ENCODE measurements at regions of chr16 and their contacts with region 1.

Region 1: DNA sequence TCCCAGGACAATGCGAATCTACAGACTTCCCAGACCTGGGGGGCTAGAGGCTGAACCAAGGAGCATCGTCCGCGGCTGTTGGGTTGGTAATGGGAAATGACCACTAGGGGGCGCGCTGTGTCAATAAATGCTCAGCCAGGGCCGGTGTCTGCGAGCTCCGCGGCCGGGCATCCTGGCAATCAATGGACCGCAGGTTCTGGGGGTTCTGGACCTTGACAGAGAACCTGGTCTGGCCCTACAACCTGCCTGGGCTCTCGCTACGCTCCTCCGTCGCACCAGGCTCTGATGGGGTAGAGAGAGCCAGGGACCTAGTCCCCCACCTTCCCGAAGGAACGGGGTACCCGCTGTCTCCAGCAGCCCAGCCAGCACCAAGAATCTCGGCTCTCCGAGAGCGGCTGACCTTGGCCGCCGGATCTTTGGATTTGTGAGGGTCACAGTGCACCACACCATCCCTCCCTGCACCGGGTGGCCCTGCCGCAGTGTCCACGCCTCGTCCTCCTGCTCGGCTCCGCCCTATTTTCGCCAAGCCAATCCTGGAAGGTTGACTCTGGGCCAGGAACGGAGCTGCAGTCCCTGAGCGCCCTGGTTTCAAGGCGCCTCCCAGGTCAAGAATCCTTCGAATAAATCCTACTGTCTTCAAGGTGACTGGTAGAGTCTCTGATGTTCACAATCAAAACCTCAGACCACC is 20.4 kb upstream of the BEAN1 start:
- DNase-seq: peak; percentile 83 to 92
- ATAC-seq: peak; percentile 87 to 94
- H3K4me3 ChIP-seq: peak overlapping the region; percentile 61
- H3K27ac ChIP-seq: peak overlapping the region; percentile 86 to 88
- H3K4me1 ChIP-seq: peaks cover 27% of the 10 kb centered on the region
- CTCF ChIP-seq: peak; percentile 87
- EP300 ChIP-seq: no peak
- POLR2A ChIP-seq: peak; percentile 37
- RAD21 ChIP-seq: peak; percentile 98

Region 2: GRCh38 chr16:66335704-66336329 is 70.9 kb before region 1 on chr16:
- CTCF ChIA-PET with region 1: no interaction called
- POLR2A ChIA-PET with region 1: no interaction called
- DNase-seq: no peak
- ATAC-seq: no peak
- H3K4me3 ChIP-seq: no peak overlapping the region
- H3K27ac ChIP-seq: no peak overlapping the region
- H3K4me1 ChIP-seq: no peaks in the 10 kb centered on the region
- CTCF ChIP-seq: no peak
- EP300 ChIP-seq: no peak
- POLR2A ChIP-seq: no peak
- RAD21 ChIP-seq: no peak

Region 3: GRCh38 chr16:66434619-66435430 is 28.1 kb after region 1 on chr16:
- CTCF ChIA-PET with region 1: interaction called, 17 read pairs
- POLR2A ChIA-PET with region 1: no interaction called
- DNase-seq: no peak
- ATAC-seq: no peak
- H3K4me3 ChIP-seq: no peak overlapping the region
- H3K27ac ChIP-seq: peak overlapping the region; percentile 61 to 82; a peak in 5 of 6 replicates
- H3K4me1 ChIP-seq: peaks cover 17% of the 10 kb centered on the region
- CTCF ChIP-seq: no peak
- EP300 ChIP-seq: no peak
- POLR2A ChIP-seq: no peak
- RAD21 ChIP-seq: no peak

Region 4: GRCh38 chr16:66469291-66469946 is 62.7 kb after region 1 on chr16:
- CTCF ChIA-PET with region 1: interaction called, 185 read pairs
- POLR2A ChIA-PET with region 1: no interaction called
- DNase-seq: no peak
- ATAC-seq: no peak
- H3K4me3 ChIP-seq: no peak overlapping the region
- H3K27ac ChIP-seq: no peak overlapping the region
- H3K4me1 ChIP-seq: 0 out of 3 replicates have a peak, but pooled peaks cover 5% of the 10 kb centered on the region
- CTCF ChIP-seq: no peak
- EP300 ChIP-seq: no peak
- POLR2A ChIP-seq: no peak
- RAD21 ChIP-seq: no peak

Region 5: DNA sequence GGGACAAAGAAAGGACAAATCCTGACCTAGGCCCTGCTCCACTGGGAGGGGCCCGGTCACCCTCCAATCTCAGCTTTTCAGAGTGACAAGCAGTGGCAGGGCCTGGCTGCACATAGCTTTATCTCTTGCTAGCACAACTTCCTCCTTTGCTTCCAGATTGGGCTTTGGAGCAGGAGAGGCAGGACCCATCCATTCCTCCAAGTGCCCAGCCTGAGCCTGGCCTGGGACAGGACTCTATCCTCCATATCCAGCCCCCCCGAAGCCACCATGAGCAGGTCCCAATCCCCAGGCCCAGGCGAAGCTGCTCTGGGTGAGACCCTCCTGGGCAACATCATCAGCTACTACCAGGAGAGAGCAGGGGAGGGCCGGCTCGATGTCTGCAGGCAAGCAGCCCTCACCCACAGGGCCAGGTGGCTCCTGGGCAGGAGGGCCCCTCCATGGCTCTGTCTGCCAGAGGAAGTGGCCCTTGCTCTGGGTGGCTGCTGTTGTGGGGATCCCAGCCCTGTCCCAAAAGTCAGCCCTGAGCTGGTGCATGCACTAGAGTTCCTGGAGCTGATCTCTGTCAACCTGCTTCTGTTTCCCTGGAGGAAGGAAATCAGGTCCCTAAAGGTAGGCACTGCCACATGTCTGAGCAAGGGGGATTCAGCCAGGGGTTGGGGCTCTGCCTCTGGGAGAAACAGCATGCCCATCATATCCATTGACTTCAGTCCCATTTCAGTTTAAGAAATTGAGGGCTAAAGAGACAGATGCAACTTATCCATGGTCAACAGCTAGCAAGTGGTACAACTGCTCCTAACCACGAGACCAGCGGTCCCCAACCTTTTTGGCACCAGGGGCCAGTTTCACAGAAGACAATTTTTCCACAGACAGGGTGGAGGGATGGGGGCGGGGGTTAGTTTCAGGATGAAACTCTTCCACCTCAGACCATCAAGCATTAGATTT is 84.4 kb after region 1 on chr16:
- CTCF ChIA-PET with region 1: interaction called, 185 read pairs
- POLR2A ChIA-PET with region 1: no interaction called
- DNase-seq: no peak
- ATAC-seq: no peak
- H3K4me3 ChIP-seq: no peak overlapping the region
- H3K27ac ChIP-seq: peak overlapping the region in 1 of 2 experiments; percentile 48; a peak in 4 of 6 replicates
- H3K4me1 ChIP-seq: peaks cover 12% of the 10 kb centered on the region
- CTCF ChIP-seq: no peak
- EP300 ChIP-seq: no peak
- POLR2A ChIP-seq: no peak
- RAD21 ChIP-seq: no peak

Region 6: GRCh38 chr16:66574081-66574480 is 167.4 kb after region 1 on chr16:
- CTCF ChIA-PET with region 1: interaction called, 13 read pairs
- POLR2A ChIA-PET with region 1: no interaction called
- DNase-seq: no peak
- ATAC-seq: no peak
- H3K4me3 ChIP-seq: no peak overlapping the region
- H3K27ac ChIP-seq: no peak overlapping the region
- H3K4me1 ChIP-seq: peaks cover 16% of the 10 kb centered on the region
- CTCF ChIP-seq: no peak
- EP300 ChIP-seq: no peak
- POLR2A ChIP-seq: no peak
- RAD21 ChIP-seq: no peak